Sigmoid colon (tissue), 7 donors: ENCODE measurements at regions of chr2 and their contacts with region 1.

Region 1: DNA sequence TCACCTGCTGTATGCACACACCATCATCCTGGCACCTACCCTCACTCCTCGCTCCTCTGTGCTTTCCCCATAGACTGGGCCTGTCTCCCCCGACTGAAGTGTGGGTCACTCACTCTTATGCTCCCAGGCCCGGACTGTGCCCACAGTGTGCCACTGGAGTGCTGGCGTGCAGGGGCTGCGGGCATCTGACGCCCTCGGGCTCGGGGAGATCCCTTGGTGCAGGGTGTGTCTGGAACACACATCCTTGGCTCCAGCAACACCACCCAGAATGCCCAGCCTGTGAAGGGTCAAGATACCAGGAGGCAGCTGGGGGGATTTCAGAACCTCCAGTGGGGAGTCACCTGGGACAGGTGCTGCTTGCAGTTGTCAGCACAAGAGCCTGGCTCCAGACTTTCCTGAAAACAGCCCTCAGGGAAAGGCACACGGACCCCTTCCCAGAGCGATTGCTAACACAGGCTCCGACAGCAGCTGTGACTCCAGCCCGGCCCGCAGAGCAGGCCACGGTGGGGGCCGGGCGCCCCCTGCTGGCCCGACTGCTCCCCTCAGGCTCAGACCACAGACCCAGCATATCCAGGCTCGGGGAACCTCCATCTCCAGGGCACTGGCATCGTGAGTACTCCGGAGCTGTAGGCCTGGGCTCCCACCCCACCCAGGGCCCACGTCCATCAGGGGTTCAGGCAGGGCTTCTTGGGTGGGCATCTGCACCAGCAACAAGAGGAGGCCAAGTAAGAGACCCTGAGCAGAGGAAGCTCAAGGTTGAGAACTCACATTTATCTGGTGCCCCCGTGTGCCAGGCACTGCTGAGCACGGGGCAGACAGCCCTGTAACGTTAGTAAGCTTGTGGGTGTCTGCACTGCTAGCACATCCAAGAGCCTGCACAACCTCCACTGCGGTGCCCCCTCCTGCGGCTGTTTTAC is 8.6 kb downstream of the HS1BP3 start:
- DNase-seq: peak; percentile 93
- H3K4me3 ChIP-seq: no peak overlapping the region
- H3K27ac ChIP-seq: peak overlapping the region; percentile 92 to 97 (median 94)
- H3K4me1 ChIP-seq: peaks cover 0 to 62% (median 56%) of the 10 kb centered on the region in 4 donors
- H3K27me3 ChIP-seq: no peaks in the 10 kb centered on the region
- CTCF ChIP-seq: peak; percentile 88 to 97 (median 94)
- EP300 ChIP-seq: no peak
- POLR2A ChIP-seq: no peak

Region 2: DNA sequence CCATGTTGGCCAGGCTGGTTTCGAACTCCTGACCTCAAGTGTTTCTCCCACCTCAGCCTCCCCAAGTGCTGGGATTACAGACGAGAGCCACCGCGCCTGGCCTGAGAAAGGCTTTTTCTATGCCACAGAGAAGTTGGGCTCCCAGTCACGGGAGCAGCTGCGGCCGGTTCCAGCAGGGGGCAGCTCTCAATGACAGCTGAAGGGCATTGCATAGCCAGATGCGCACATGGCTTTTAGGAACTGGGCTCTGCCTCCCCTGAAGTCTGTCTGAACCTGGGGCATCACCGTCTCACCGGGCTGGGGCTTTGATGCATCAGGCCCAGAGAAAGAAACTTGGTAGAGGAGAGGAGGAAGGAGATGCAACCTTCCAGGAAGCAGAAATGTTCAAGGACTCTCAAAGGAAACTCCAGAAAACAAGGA is 506.7 kb before region 1 on chr2:
- intact Hi-C with region 1: loop called (anchors 10 kb)
- DNase-seq: peak; percentile 72
- H3K4me3 ChIP-seq: no peak overlapping the region
- H3K27ac ChIP-seq: no peak overlapping the region
- H3K4me1 ChIP-seq: no peaks in the 10 kb centered on the region
- H3K27me3 ChIP-seq: no peaks in the 10 kb centered on the region
- CTCF ChIP-seq: peak in 2 of 4 experiments; percentile 46 to 55
- EP300 ChIP-seq: no peak
- POLR2A ChIP-seq: no peak

Region 3: GRCh38 chr2:20378792-20379519 is 263.4 kb before region 1 on chr2:
- intact Hi-C with region 1: loop called (anchors 2 kb)
- DNase-seq: peak; percentile 96
- H3K4me3 ChIP-seq: no peak overlapping the region
- H3K27ac ChIP-seq: peak overlapping the region; percentile 74 to 83 (median 79)
- H3K4me1 ChIP-seq: peaks cover 0 to 33% (median 29%) of the 10 kb centered on the region in 4 donors
- H3K27me3 ChIP-seq: no peaks in the 10 kb centered on the region
- CTCF ChIP-seq: peak; percentile 80 to 85 (median 83)
- EP300 ChIP-seq: peak in 1 of 4 donors; percentile 29
- POLR2A ChIP-seq: no peak

Region 4: GRCh38 chr2:20398956-20399567 is 243.3 kb before region 1 on chr2:
- intact Hi-C with region 1: loop called (anchors 5 kb)
- DNase-seq: peak; percentile 50
- H3K4me3 ChIP-seq: no peak overlapping the region
- H3K27ac ChIP-seq: peak overlapping the region in 1 of 4 donors; percentile 46
- H3K4me1 ChIP-seq: peaks cover 0 to 21% (median 14%) of the 10 kb centered on the region in 4 donors
- H3K27me3 ChIP-seq: no peaks in the 10 kb centered on the region
- CTCF ChIP-seq: no peak
- EP300 ChIP-seq: no peak
- POLR2A ChIP-seq: no peak